ENCODE measurements at regions of chr16 and their contacts with region 1.

Region 1: GRCh38 chr16:57576429-57576870 is 34.0 kb downstream of the ADGRG5 start:
- DNase-seq: peak; percentile 67 to 86 (median 73)
- H3K4me3 ChIP-seq: no peak overlapping the region
- H3K4me3 Mint-ChIP-seq: peak overlapping the region in 2 of 7 donors; percentile 52 to 58
- H3K27ac ChIP-seq: no peak overlapping the region
- H3K27ac Mint-ChIP-seq: peak overlapping the region; percentile 26 to 96 (median 78)
- H3K4me1 ChIP-seq: peaks cover 46% of the 10 kb centered on the region
- H3K4me1 Mint-ChIP-seq: peaks cover 46 to 52% (median 47%) of the 10 kb centered on the region in 3 donors
- H3K27me3 ChIP-seq: no peaks in the 10 kb centered on the region
- H3K27me3 Mint-ChIP-seq: peaks cover 0 to 3% of the 10 kb centered on the region in 2 donors

Region 2: GRCh38 chr16:56013962-56014552 is 1562.4 kb before region 1 on chr16:
- CTCF ChIA-PET with region 1: no interaction called
- POLR2A ChIA-PET with region 1: no interaction called
- DNase-seq: peak in 2 of 5 donors; percentile 12 to 54
- H3K4me3 ChIP-seq: no peak overlapping the region
- H3K4me3 Mint-ChIP-seq: no peak overlapping the region
- H3K27ac ChIP-seq: no peak overlapping the region
- H3K27ac Mint-ChIP-seq: no peak overlapping the region
- H3K4me1 ChIP-seq: no peaks in the 10 kb centered on the region
- H3K4me1 Mint-ChIP-seq: no peaks in the 10 kb centered on the region
- H3K27me3 ChIP-seq: peaks cover 3% of the 10 kb centered on the region
- H3K27me3 Mint-ChIP-seq: peaks cover 16 to 47% of the 10 kb centered on the region in 2 donors

Region 3: GRCh38 chr16:57244767-57245471 is 331.5 kb before region 1 on chr16 and contains the start of gene ARL2BP:
- CTCF ChIA-PET with region 1: no interaction called
- POLR2A ChIA-PET with region 1: no interaction called
- DNase-seq: peak; percentile 94 to 97 (median 97)
- H3K4me3 ChIP-seq: peak within 1 kb of the TSS; percentile 69
- H3K4me3 Mint-ChIP-seq: peak within 1 kb of the TSS; percentile 90 to 98 (median 96)
- H3K27ac ChIP-seq: peak within 1 kb of the TSS; percentile 76
- H3K27ac Mint-ChIP-seq: peak within 1 kb of the TSS; percentile 91 to 99 (median 97)
- H3K4me1 ChIP-seq: peaks cover 17% of the 10 kb centered on the region
- H3K4me1 Mint-ChIP-seq: peaks cover 15 to 24% (median 19%) of the 10 kb centered on the region in 3 donors
- H3K27me3 ChIP-seq: no peaks in the 10 kb centered on the region
- H3K27me3 Mint-ChIP-seq: no peaks in the 10 kb centered on the region
- total RNA-seq, gene ARL2BP: 29.9 to 30.1 TPM

Region 4: GRCh38 chr16:57544119-57544653 is 32.3 kb before region 1 on chr16:
- CTCF ChIA-PET with region 1: interaction called, 26 read pairs
- POLR2A ChIA-PET with region 1: no interaction called
- DNase-seq: no peak
- H3K4me3 ChIP-seq: peak overlapping the region; percentile 48
- H3K4me3 Mint-ChIP-seq: peak overlapping the region; percentile 81 to 97 (median 91)
- H3K27ac ChIP-seq: peak overlapping the region; percentile 7
- H3K27ac Mint-ChIP-seq: peak overlapping the region; percentile 78 to 92 (median 87)
- H3K4me1 ChIP-seq: peaks cover 52% of the 10 kb centered on the region
- H3K4me1 Mint-ChIP-seq: peaks cover 55 to 77% (median 57%) of the 10 kb centered on the region in 3 donors
- H3K27me3 ChIP-seq: no peaks in the 10 kb centered on the region
- H3K27me3 Mint-ChIP-seq: peaks cover 0 to 1% of the 10 kb centered on the region in 2 donors

Region 5: GRCh38 chr16:57600048-57600835 is 23.8 kb after region 1 on chr16:
- CTCF ChIA-PET with region 1: interaction called, 30 read pairs
- POLR2A ChIA-PET with region 1: interaction called, 6 read pairs
- DNase-seq: no peak
- H3K4me3 ChIP-seq: no peak overlapping the region
- H3K4me3 Mint-ChIP-seq: peak overlapping the region in 6 of 7 donors; percentile 29 to 80 (median 35)
- H3K27ac ChIP-seq: no peak overlapping the region
- H3K27ac Mint-ChIP-seq: peak overlapping the region; percentile 52 to 95 (median 90)
- H3K4me1 ChIP-seq: peaks cover 45% of the 10 kb centered on the region
- H3K4me1 Mint-ChIP-seq: peaks cover 67 to 80% (median 67%) of the 10 kb centered on the region in 3 donors
- H3K27me3 ChIP-seq: no peaks in the 10 kb centered on the region
- H3K27me3 Mint-ChIP-seq: no peaks in the 10 kb centered on the region

Region 6: DNA sequence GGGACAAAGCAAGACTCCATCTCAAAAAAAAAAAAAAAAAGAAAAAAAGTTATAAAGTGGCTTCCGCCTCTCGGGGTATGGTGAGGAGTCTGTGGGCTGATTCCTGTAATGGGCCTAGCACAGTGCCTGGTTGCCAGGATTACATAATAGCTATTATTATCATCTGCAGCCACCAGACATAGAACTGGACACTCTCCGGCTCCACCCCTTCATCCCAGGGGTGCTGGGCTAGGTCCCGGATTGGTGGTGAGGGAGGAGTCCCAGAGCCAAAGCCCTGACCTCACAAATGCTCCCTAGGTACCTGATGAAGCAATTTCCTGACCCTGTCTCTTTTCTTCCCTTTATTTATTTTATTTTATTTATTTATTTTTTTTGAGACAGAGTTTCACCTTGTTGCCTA is 40.4 kb after region 1 on chr16:
- CTCF ChIA-PET with region 1: interaction called, 53 read pairs
- POLR2A ChIA-PET with region 1: no interaction called
- DNase-seq: peak in 1 of 5 donors; percentile 8
- H3K4me3 ChIP-seq: no peak overlapping the region
- H3K4me3 Mint-ChIP-seq: no peak overlapping the region
- H3K27ac ChIP-seq: no peak overlapping the region
- H3K27ac Mint-ChIP-seq: no peak overlapping the region
- H3K4me1 ChIP-seq: peaks cover 8% of the 10 kb centered on the region
- H3K4me1 Mint-ChIP-seq: peaks cover 31 to 55% (median 34%) of the 10 kb centered on the region in 3 donors
- H3K27me3 ChIP-seq: no peaks in the 10 kb centered on the region
- H3K27me3 Mint-ChIP-seq: no peaks in the 10 kb centered on the region

Region 7: GRCh38 chr16:57648590-57649442 is 72.4 kb after region 1 on chr16:
- CTCF ChIA-PET with region 1: interaction called, 215 read pairs
- POLR2A ChIA-PET with region 1: no interaction called
- DNase-seq: peak; percentile 75 to 88 (median 79)
- H3K4me3 ChIP-seq: no peak overlapping the region
- H3K4me3 Mint-ChIP-seq: peak overlapping the region; percentile 41 to 88 (median 75)
- H3K27ac ChIP-seq: no peak overlapping the region
- H3K27ac Mint-ChIP-seq: peak overlapping the region; percentile 63 to 96 (median 83)
- H3K4me1 ChIP-seq: peaks cover 34% of the 10 kb centered on the region
- H3K4me1 Mint-ChIP-seq: peaks cover 45 to 54% (median 46%) of the 10 kb centered on the region in 3 donors
- H3K27me3 ChIP-seq: no peaks in the 10 kb centered on the region
- H3K27me3 Mint-ChIP-seq: peaks cover 0 to 2% of the 10 kb centered on the region in 2 donors

Region 8: GRCh38 chr16:57672824-57673223 is 96.4 kb after region 1 on chr16:
- CTCF ChIA-PET with region 1: interaction called, 10 read pairs
- POLR2A ChIA-PET with region 1: no interaction called
- DNase-seq: no peak
- H3K4me3 ChIP-seq: no peak overlapping the region
- H3K4me3 Mint-ChIP-seq: no peak overlapping the region
- H3K27ac ChIP-seq: no peak overlapping the region
- H3K27ac Mint-ChIP-seq: no peak overlapping the region
- H3K4me1 ChIP-seq: no peaks in the 10 kb centered on the region
- H3K4me1 Mint-ChIP-seq: no peaks in the 10 kb centered on the region
- H3K27me3 ChIP-seq: no peaks in the 10 kb centered on the region
- H3K27me3 Mint-ChIP-seq: peaks cover 0 to 6% of the 10 kb centered on the region in 2 donors